Sigmoid colon (tissue), 7 donors: ENCODE measurements at regions of chr15 and their contacts with region 1.

Region 1: GRCh38 chr15:41660235-41661077 is at the start of gene MGA:
- DNase-seq: peak; percentile 95
- H3K4me3 ChIP-seq: peak within 1 kb of the TSS; percentile 41 to 62 (median 55)
- H3K27ac ChIP-seq: peak within 1 kb of the TSS; percentile 75 to 86 (median 82)
- H3K4me1 ChIP-seq: peaks cover 0 to 45% (median 29%) of the 10 kb centered on the region in 4 donors
- H3K27me3 ChIP-seq: no peaks in the 10 kb centered on the region
- CTCF ChIP-seq: no peak
- EP300 ChIP-seq: no peak
- POLR2A ChIP-seq: no peak
- total RNA-seq, gene MGA: 36.0 to 64.8 (median 60.6) TPM

Region 2: GRCh38 chr15:41621200-41622193 is 39.0 kb before region 1 on chr15:
- intact Hi-C with region 1: loop called (anchors 1 kb)
- DNase-seq: peak; percentile 92
- H3K4me3 ChIP-seq: peak overlapping the region; percentile 28 to 68 (median 52)
- H3K27ac ChIP-seq: peak overlapping the region; percentile 71 to 82 (median 76)
- H3K4me1 ChIP-seq: peaks cover 0 to 20% (median 8%) of the 10 kb centered on the region in 4 donors
- H3K27me3 ChIP-seq: no peaks in the 10 kb centered on the region
- CTCF ChIP-seq: no peak
- EP300 ChIP-seq: no peak
- POLR2A ChIP-seq: no peak